ENCODE measurements at regions of chr17 and their contacts with region 1.

Region 1: GRCh38 chr17:62065598-62066468 is 755 bp upstream of the MED13 start:
- DNase-seq: peak; percentile 91 to 96
- H3K4me3 ChIP-seq: peak overlapping the region; percentile 96
- H3K27ac ChIP-seq: peak overlapping the region; percentile 90
- H3K4me1 ChIP-seq: peaks cover 28% of the 10 kb centered on the region
- H3K27me3 ChIP-seq: no peaks in the 10 kb centered on the region
- CTCF ChIP-seq: peak; percentile 93

Region 2: DNA sequence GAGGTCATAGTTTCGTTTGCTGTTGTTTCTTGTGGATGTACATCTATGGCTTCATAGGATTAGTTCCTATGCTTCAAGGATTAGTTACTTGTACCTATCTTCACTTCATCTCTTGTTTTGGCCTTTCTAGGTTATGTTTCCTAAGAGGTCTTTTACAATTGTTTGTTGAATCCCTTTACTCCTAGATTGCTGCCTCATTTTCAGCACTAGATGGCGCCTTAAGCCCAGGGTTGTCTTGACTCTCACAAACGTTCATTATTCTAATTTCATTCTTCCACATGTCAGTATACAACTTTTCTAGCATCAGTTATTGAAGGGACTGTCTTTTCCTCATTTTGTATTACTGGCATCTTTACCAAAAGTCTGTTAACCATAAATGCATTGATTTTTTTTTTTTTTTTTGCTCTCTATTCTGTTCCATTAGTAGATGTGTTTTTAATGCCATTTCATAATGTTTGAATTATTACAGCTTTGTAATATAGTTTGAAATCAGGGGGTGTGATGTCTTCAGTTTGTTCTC is 429.9 kb before region 1 on chr17:
- CTCF ChIA-PET with region 1: no interaction called
- POLR2A ChIA-PET with region 1: no interaction called
- intact Hi-C with region 1: loop called (anchors 5 kb)
- DNase-seq: peak; percentile 36 to 43
- H3K4me3 ChIP-seq: no peak overlapping the region
- H3K27ac ChIP-seq: no peak overlapping the region
- H3K4me1 ChIP-seq: no peaks in the 10 kb centered on the region
- H3K27me3 ChIP-seq: no peaks in the 10 kb centered on the region
- CTCF ChIP-seq: peak; percentile 90

Region 3: DNA sequence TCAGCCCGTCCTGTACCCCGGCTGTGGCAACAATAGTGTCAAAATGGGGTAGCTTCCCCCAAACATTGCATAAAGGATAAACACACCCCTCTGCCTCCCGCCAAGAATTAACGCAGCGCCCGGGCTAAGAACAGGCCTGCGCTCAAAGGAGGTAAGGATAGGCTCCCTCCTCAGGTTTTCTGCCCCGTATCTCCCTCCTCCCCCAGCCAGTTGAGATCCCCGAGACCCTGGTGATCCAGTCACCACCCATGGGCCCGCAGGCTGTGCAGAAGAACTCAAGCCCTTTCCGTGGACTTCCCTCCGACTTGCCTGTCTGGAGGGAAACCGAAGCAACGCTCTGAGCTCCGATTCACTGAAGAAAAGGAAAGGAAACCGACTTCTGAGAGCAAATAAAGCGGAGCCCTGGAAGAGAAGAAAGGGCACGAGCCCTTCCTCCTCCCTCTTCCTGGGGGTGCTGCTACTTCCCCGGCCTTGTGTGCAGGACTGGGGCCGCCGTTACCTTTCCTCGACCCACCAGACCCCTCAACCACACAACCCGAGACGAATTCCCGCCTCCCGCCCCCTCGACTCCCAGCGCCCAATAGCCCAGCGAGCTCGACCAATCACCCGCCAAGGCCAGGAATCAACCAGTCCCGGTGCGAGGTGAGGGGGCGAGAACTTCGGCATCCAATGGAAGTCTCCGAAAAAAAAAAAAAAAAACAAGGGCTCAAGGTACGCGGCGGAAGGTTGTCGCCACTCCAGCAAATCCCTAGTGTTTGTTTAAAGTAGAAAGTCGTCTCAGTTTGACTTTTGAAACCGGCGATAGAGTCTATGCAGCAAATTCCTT is 202.6 kb before region 1 on chr17 and contains the start of gene BRIP1:
- CTCF ChIA-PET with region 1: no interaction called
- POLR2A ChIA-PET with region 1: interaction called, 4 read pairs
- intact Hi-C with region 1: loop called (anchors 10 kb)
- DNase-seq: peak; percentile 89 to 91
- H3K4me3 ChIP-seq: peak within 1 kb of the TSS; percentile 83
- H3K27ac ChIP-seq: peak within 1 kb of the TSS; percentile 71
- H3K4me1 ChIP-seq: peaks cover 30% of the 10 kb centered on the region
- H3K27me3 ChIP-seq: no peaks in the 10 kb centered on the region
- CTCF ChIP-seq: no peak
- total RNA-seq, gene BRIP1: 14.4 and 16.0 TPM in 2 replicates

Region 4: DNA sequence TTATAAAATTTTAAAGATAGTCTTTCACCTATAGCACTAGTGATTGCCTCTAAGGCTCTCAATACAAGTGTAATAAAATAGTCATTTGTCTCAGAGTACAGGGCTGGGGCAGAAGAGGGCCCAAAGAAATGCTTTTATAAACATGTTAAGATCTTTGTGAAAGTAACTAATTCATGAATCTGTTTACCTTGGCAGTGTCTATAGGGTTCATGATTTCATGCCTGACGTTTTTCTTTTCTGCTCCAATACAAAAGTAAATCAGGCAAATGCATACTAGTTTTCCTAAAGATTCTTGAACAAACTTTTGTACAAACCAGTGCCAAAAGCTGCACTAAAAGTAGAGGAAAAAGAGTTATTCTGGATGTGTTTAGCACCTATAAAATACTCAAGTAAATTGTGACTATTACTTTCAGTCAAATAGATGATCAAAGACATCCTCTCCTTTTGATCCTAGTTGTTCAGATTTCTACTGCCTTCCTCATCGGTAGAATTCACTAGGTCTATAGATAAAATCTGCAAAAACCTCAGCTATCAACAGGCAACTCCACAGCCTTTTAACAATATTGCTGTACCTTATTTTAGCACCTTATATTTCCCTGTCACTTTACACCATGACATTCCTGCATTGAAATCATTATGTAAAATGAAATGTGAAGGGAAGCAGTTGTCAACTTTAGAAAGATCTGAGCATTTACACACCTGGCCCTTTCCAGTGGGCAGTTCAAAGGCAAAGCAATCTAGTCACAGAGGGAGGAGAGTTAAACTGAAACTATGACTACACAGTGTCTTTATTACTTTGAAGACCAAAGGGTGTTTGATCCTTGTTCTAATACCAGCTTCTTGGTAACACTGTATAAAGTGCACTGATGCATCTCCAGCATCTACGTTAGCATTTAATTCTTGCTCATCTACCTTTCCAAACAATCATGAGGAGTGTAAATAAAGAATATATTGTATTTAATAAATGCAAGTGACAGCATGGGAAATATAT is 99.2 kb after region 1 on chr17:
- CTCF ChIA-PET with region 1: interaction called, 15 read pairs
- POLR2A ChIA-PET with region 1: interaction called, 4 read pairs
- intact Hi-C with region 1: no loop called
- DNase-seq: peak in 1 of 2 experiments; percentile 92
- H3K4me3 ChIP-seq: 0 out of 2 replicates have a peak overlapping the region, but pooled peaks have one; percentile 6
- H3K27ac ChIP-seq: peak overlapping the region; percentile 90
- H3K4me1 ChIP-seq: peaks cover 53% of the 10 kb centered on the region
- H3K27me3 ChIP-seq: no peaks in the 10 kb centered on the region
- CTCF ChIP-seq: no peak

Region 5: GRCh38 chr17:62179534-62180151 is 113.8 kb after region 1 on chr17:
- CTCF ChIA-PET with region 1: interaction called, 8 read pairs
- POLR2A ChIA-PET with region 1: interaction called, 15 read pairs
- intact Hi-C with region 1: no loop called
- DNase-seq: peak; percentile 29 to 83
- H3K4me3 ChIP-seq: no peak overlapping the region
- H3K27ac ChIP-seq: peak overlapping the region; percentile 65
- H3K4me1 ChIP-seq: peaks cover 25% of the 10 kb centered on the region
- H3K27me3 ChIP-seq: no peaks in the 10 kb centered on the region
- CTCF ChIP-seq: peak; percentile 55; the same call in 1 of the 2 replicates